ENCODE measurements at regions of chr11 and their contacts with region 1.

Region 1: DNA sequence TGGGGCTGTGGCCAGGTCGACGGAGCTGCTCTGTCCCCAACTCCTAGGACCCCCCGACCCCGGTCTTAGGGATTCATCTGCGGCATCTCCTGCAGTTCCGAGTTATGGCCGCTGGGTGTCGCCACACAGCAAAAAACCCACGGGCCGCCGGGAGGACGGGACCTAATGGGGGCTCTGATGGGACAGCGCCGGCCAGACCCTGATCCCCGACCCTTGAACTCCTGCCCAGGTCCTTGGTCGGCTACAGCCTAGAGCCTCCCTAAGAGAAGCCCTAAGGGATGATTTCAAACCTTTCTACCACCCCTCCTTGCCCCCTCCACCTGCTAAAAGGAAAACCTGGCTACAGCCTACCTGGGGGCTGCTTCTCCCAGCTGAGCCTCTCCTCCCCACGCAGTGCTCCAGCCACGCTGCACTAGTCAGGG is 30.8 kb upstream of the LRRC10B start:
- DNase-seq: no peak
- ATAC-seq: peak; percentile 75
- H3K4me3 ChIP-seq: no peak overlapping the region
- H3K27ac ChIP-seq: no peak overlapping the region
- H3K4me1 ChIP-seq: no peaks in the 10 kb centered on the region
- H3K27me3 ChIP-seq: peaks cover 15% of the 10 kb centered on the region; the same call in 1 of the 2 replicates
- CTCF ChIP-seq: peak; percentile 79
- POLR2A ChIP-seq: 0 out of 2 replicates have a peak, but pooled peaks have one; percentile 21
- RAD21 ChIP-seq: peak; percentile 84

Region 2: DNA sequence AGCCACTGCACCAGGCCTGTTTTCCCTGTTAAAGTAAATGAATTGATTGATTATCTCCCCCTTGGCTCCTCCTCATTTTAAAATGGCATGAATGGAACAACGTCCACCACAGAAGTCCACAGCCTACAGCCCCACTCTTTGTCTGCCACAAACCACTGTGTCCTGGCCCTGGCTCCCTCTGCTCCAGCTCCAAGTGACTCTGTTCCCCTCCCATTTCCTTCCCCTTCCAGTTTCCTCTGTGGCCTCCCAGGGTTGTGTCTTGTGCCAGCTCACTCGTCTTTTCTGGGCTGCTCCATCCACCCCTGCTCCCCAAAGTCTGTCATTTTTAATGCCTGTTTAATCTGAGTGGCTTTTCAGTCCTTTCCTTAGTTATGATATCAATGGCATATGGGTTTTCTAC is 427.9 kb before region 1 on chr11:
- CTCF ChIA-PET with region 1: no interaction called
- POLR2A ChIA-PET with region 1: no interaction called
- dilution Hi-C with region 1: no loop called
- in situ Hi-C with region 1: no loop called
- intact Hi-C with region 1: no loop called
- DNase-seq: no peak
- ATAC-seq: no peak
- H3K4me3 ChIP-seq: no peak overlapping the region
- H3K27ac ChIP-seq: no peak overlapping the region
- H3K4me1 ChIP-seq: no peaks in the 10 kb centered on the region
- H3K27me3 ChIP-seq: peaks cover 47% of the 10 kb centered on the region
- CTCF ChIP-seq: no peak
- POLR2A ChIP-seq: no peak
- RAD21 ChIP-seq: no peak

Region 3: DNA sequence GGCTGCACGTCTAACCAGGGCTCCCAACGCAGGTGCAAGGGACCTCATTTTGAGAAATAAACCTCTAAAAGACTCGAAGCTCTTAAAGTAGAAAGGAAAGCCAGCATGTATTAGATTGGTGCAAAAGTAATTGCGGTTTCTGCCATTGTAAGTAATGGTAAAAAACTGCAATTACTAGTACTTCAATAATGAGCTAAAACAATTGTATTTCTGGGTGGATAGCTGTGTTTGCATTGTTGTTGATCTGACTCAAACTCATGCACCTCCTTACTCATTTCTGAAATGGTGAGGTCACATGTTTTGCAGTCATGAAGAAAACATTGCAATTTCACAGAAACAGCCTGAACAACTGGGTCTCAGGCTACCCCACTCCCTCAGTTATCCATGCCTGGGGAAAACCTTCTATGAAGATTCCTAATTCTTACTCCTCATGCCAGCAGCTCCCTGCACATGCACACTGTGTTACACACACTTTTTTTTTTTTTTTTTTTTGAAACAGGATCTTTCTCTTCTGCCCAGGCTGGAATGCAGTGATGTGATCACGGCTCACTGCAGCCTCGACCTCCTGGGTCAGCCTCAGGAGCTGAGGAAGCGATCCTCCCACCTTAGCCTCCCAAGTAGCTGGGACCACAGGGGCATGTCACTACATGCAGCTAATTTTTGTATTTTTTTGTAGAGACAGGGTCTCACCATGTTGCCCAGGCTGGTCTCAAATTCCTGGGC is 207.2 kb before region 1 on chr11:
- CTCF ChIA-PET with region 1: no interaction called
- POLR2A ChIA-PET with region 1: no interaction called
- dilution Hi-C with region 1: no loop called
- in situ Hi-C with region 1: no loop called
- intact Hi-C with region 1: no loop called
- DNase-seq: peak; percentile 76
- ATAC-seq: peak; percentile 78
- H3K4me3 ChIP-seq: no peak overlapping the region
- H3K27ac ChIP-seq: no peak overlapping the region
- H3K4me1 ChIP-seq: peaks cover 2% of the 10 kb centered on the region
- H3K27me3 ChIP-seq: no peaks in the 10 kb centered on the region
- CTCF ChIP-seq: no peak
- POLR2A ChIP-seq: no peak
- RAD21 ChIP-seq: no peak

Region 4: GRCh38 chr11:61516675-61517572 is 39.2 kb after region 1 on chr11:
- CTCF ChIA-PET with region 1: interaction called, 26 read pairs
- POLR2A ChIA-PET with region 1: no interaction called
- dilution Hi-C with region 1: no loop called
- in situ Hi-C with region 1: loop called (anchors 5 kb)
- intact Hi-C with region 1: loop called (anchors 1 kb)
- DNase-seq: no peak
- ATAC-seq: peak; percentile 83
- H3K4me3 ChIP-seq: no peak overlapping the region
- H3K27ac ChIP-seq: no peak overlapping the region
- H3K4me1 ChIP-seq: no peaks in the 10 kb centered on the region
- H3K27me3 ChIP-seq: peaks cover 28% of the 10 kb centered on the region
- CTCF ChIP-seq: peak; percentile 84
- POLR2A ChIP-seq: no peak
- RAD21 ChIP-seq: peak; percentile 84

Region 5: DNA sequence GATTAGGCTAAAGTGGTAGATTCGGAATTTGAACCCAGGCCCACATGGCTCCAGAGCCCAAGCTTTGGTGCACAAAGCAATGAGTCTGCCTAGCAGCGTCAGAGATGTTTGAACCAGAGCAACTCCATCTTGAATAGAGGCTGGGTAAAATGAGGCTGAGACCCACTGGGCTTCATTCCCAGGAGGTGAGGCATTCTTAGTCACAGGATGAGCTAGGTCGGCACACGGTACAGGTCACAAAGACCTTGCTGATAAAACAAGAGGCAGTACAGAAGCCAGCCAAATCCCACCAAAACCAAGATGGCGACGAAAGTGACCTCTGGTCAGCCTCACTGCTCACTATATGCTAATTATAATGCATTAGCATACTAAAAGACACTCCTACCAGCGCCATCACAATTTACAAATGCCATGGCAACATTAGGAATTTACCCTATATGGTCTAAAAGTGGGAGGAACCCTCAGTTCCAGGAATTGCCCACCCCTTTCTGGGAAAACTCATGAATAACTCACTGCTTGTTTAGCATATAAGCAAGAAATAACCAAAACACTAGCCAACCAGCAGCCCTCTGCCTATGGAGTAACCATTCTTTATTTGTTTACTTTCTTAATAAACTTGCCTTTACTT is 162.2 kb after region 1 on chr11:
- CTCF ChIA-PET with region 1: interaction called, 5 read pairs
- POLR2A ChIA-PET with region 1: interaction called, 4 read pairs
- dilution Hi-C with region 1: no loop called
- in situ Hi-C with region 1: loop called (anchors 5 kb)
- intact Hi-C with region 1: loop called (anchors 1 kb)
- DNase-seq: peak; percentile 31
- ATAC-seq: peak; percentile 59
- H3K4me3 ChIP-seq: no peak overlapping the region
- H3K27ac ChIP-seq: peak overlapping the region; percentile 59; the same call in 1 of the 2 replicates
- H3K4me1 ChIP-seq: peaks cover 7% of the 10 kb centered on the region; the same call in 1 of the 2 replicates
- H3K27me3 ChIP-seq: peaks cover 16% of the 10 kb centered on the region
- CTCF ChIP-seq: no peak
- POLR2A ChIP-seq: no peak
- RAD21 ChIP-seq: no peak

Region 6: GRCh38 chr11:61733120-61733978 is 255.6 kb after region 1 on chr11:
- CTCF ChIA-PET with region 1: no interaction called
- POLR2A ChIA-PET with region 1: no interaction called
- dilution Hi-C with region 1: no loop called
- in situ Hi-C with region 1: no loop called
- intact Hi-C with region 1: loop called (anchors 1 kb)
- DNase-seq: peak; percentile 80
- ATAC-seq: peak; percentile 94
- H3K4me3 ChIP-seq: no peak overlapping the region
- H3K27ac ChIP-seq: no peak overlapping the region
- H3K4me1 ChIP-seq: peaks cover 3% of the 10 kb centered on the region; the same call in 1 of the 2 replicates
- H3K27me3 ChIP-seq: no peaks in the 10 kb centered on the region
- CTCF ChIP-seq: peak; percentile 98
- POLR2A ChIP-seq: no peak
- RAD21 ChIP-seq: peak; percentile 96

Measured in IMR-90 (cell line).